ENCODE measurements at regions of chr21 and their contacts with region 1.

Region 1: GRCh38 chr21:35400233-35400957 is 351.3 kb upstream of the RUNX1 start:
- DNase-seq: peak; percentile 58
- H3K4me3 Mint-ChIP-seq: peak overlapping the region; percentile 22
- H3K27ac Mint-ChIP-seq: peak overlapping the region; percentile 27
- H3K4me1 Mint-ChIP-seq: peaks cover 24% of the 10 kb centered on the region
- H3K27me3 Mint-ChIP-seq: no peaks in the 10 kb centered on the region

Region 2: GRCh38 chr21:34745557-34746255 is 654.7 kb before region 1 on chr21:
- CTCF ChIA-PET with region 1: interaction called, 22 read pairs
- intact Hi-C with region 1: loop called (anchors 1 kb)
- DNase-seq: peak; percentile 74
- H3K4me3 Mint-ChIP-seq: peak overlapping the region; percentile 47
- H3K27ac Mint-ChIP-seq: peak overlapping the region; percentile 54
- H3K4me1 Mint-ChIP-seq: peaks cover 4% of the 10 kb centered on the region
- H3K27me3 Mint-ChIP-seq: no peaks in the 10 kb centered on the region

Region 3: GRCh38 chr21:34967509-34968289 is 432.7 kb before region 1 on chr21:
- CTCF ChIA-PET with region 1: interaction called, 3 read pairs
- intact Hi-C with region 1: loop called (anchors 5 kb)
- DNase-seq: peak; percentile 73
- H3K4me3 Mint-ChIP-seq: peak overlapping the region; percentile 47
- H3K27ac Mint-ChIP-seq: peak overlapping the region; percentile 93
- H3K4me1 Mint-ChIP-seq: peaks cover 84% of the 10 kb centered on the region
- H3K27me3 Mint-ChIP-seq: no peaks in the 10 kb centered on the region

Region 4: GRCh38 chr21:35342440-35342839 is 58.0 kb before region 1 on chr21:
- CTCF ChIA-PET with region 1: interaction called, 3 read pairs
- intact Hi-C with region 1: loop called (anchors 2 kb)
- DNase-seq: peak; percentile 68
- H3K4me3 Mint-ChIP-seq: peak overlapping the region; percentile 39
- H3K27ac Mint-ChIP-seq: peak overlapping the region; percentile 93
- H3K4me1 Mint-ChIP-seq: peaks cover 42% of the 10 kb centered on the region
- H3K27me3 Mint-ChIP-seq: peaks cover 4% of the 10 kb centered on the region

Region 5: GRCh38 chr21:35457097-35457804 is 56.9 kb after region 1 on chr21:
- CTCF ChIA-PET with region 1: no interaction called
- intact Hi-C with region 1: no loop called
- DNase-seq: peak; percentile 25
- H3K4me3 Mint-ChIP-seq: no peak overlapping the region
- H3K27ac Mint-ChIP-seq: no peak overlapping the region
- H3K4me1 Mint-ChIP-seq: no peaks in the 10 kb centered on the region
- H3K27me3 Mint-ChIP-seq: no peaks in the 10 kb centered on the region

Region 6: DNA sequence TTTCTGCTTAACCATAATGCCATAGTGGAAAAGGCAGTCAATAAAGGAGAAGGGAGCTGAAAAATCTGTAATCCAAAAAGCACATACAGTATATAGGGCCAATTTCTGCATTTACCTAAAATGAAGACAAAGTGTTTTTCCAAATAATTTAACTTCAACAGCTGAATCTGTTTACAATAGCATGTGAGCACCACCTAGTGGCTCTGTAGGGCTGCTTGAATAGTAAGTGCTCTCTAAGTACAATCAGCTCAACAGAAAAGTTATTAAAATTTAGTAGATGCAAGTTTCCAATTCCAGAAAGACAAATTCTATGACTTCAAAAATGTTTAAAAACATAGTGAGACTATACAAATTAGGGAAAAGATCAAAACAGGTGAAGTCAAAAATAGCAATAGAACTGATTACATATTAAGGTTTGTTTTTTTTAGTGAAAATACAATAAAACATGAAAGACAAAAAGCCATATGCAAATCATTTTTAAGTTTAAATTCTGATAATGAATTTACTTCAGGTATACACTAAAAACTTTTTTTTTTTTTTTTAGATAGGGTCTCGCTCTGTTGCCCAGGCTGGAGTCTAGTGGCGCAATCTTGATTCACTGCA is 439.9 kb after region 1 on chr21:
- CTCF ChIA-PET with region 1: interaction called, 3 read pairs
- intact Hi-C with region 1: loop called (anchors 10 kb)
- DNase-seq: peak; percentile 74
- H3K4me3 Mint-ChIP-seq: no peak overlapping the region
- H3K27ac Mint-ChIP-seq: no peak overlapping the region
- H3K4me1 Mint-ChIP-seq: peaks cover 3% of the 10 kb centered on the region
- H3K27me3 Mint-ChIP-seq: no peaks in the 10 kb centered on the region

Region 7: GRCh38 chr21:36028127-36029069 is 628.0 kb after region 1 on chr21:
- CTCF ChIA-PET with region 1: no interaction called
- intact Hi-C with region 1: loop called (anchors 5 kb)
- DNase-seq: peak; percentile 78
- H3K4me3 Mint-ChIP-seq: no peak overlapping the region
- H3K27ac Mint-ChIP-seq: no peak overlapping the region
- H3K4me1 Mint-ChIP-seq: peaks cover 5% of the 10 kb centered on the region
- H3K27me3 Mint-ChIP-seq: no peaks in the 10 kb centered on the region